CD8-positive, alpha-beta T cell (primary cell): ENCODE measurements at regions of chr14 and their contacts with region 1.

Region 1: GRCh38 chr14:106681568-106681967 is 1155.2 kb downstream of the TMEM121 start:
- DNase-seq: no peak
- ATAC-seq: peak; percentile 71
- H3K4me3 ChIP-seq: no peak overlapping the region
- H3K4me3 Mint-ChIP-seq: no peak overlapping the region
- H3K27ac ChIP-seq: no peak overlapping the region
- H3K27ac Mint-ChIP-seq: no peak overlapping the region
- H3K4me1 ChIP-seq: no peaks in the 10 kb centered on the region
- H3K4me1 Mint-ChIP-seq: no peaks in the 10 kb centered on the region
- H3K27me3 ChIP-seq: no peaks in the 10 kb centered on the region
- H3K27me3 Mint-ChIP-seq: peaks cover 8% of the 10 kb centered on the region
- CTCF ChIP-seq: peak; percentile 33

Region 2: DNA sequence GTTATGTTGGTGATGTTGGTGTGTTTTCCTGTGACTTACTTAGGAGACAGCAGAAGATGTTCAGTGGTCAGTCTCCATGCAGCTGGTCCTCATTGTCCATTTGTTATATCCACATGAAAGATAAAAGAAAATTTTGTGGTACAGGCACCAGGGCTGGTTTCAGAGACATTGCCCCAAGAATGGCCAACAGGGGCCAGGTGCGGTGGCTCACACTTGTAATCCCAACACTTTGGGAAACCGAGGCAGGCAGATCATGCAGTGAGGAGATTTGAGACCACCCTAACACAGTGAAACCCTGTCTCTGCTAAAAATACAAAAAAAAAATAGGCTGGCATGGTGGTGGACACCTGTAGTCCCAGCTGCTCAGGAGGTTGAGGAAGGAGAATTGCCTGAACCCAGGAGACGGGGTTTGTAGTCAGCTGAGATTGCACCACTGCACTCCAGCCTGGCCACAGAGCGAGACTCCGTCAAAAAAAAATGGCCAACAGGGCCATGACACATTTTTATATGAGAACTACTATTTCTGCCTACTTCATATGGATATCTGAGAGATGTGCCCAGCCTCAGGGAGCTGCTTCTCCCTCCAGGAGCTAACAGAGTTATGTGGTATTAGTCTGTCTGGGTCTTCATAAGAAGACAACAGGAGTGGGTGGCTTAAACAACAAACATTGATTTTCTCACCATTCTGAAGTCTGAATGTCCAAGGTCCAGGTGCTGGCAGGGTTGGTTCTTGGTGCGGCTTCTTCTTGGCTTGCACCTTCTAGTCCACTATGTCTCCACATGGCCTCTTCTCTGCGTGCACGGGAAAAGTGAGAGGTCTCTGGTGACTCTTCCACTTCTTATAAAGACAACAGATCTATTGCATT is 333.4 kb before region 1 on chr14:
- CTCF ChIA-PET with region 1: no interaction called
- POLR2A ChIA-PET with region 1: no interaction called
- intact Hi-C with region 1: no loop called
- DNase-seq: no peak
- ATAC-seq: no peak
- H3K4me3 ChIP-seq: no peak overlapping the region
- H3K4me3 Mint-ChIP-seq: no peak overlapping the region
- H3K27ac ChIP-seq: no peak overlapping the region
- H3K27ac Mint-ChIP-seq: no peak overlapping the region
- H3K4me1 ChIP-seq: no peaks in the 10 kb centered on the region
- H3K4me1 Mint-ChIP-seq: peaks cover 4% of the 10 kb centered on the region
- H3K27me3 ChIP-seq: no peaks in the 10 kb centered on the region
- H3K27me3 Mint-ChIP-seq: peaks cover 19% of the 10 kb centered on the region
- CTCF ChIP-seq: no peak

Region 3: GRCh38 chr14:106657460-106657859 is 24.1 kb before region 1 on chr14:
- CTCF ChIA-PET with region 1: interaction called, 10 read pairs
- POLR2A ChIA-PET with region 1: interaction called, 3 read pairs
- intact Hi-C with region 1: no loop called
- DNase-seq: peak in 8 of 9 experiments; percentile 31 to 77 (median 68)
- ATAC-seq: peak; percentile 73
- H3K4me3 ChIP-seq: no peak overlapping the region
- H3K4me3 Mint-ChIP-seq: no peak overlapping the region
- H3K27ac ChIP-seq: no peak overlapping the region
- H3K27ac Mint-ChIP-seq: no peak overlapping the region
- H3K4me1 ChIP-seq: peaks cover 3% of the 10 kb centered on the region
- H3K4me1 Mint-ChIP-seq: peaks cover 22% of the 10 kb centered on the region
- H3K27me3 ChIP-seq: no peaks in the 10 kb centered on the region
- H3K27me3 Mint-ChIP-seq: peaks cover under 1% of the 10 kb centered on the region
- CTCF ChIP-seq: peak; percentile 77